ENCODE measurements at regions of chr2 and their contacts with region 1.

Region 1: DNA sequence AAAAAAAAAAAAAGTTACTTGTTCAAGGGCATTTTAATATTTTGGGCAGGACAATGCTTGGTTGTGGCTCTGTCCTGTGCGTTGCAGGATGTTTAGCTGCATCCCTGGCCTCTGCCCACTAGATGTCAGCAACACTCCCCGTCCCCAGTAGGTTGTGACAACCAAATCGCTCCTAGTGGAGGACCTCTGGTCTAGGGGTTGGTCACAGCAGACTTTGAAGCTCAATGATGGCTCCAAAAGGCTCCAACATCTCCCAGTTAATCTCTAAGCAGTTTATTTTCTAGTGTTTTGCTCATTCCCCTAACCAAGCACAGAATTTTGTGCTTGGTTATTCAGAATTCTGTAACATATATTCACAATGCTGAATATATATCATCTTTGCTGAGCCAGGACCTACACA is 67.0 kb downstream of the CHRNA1 start:
- DNase-seq: peak; percentile 81
- ATAC-seq: peak; percentile 96
- H3K4me3 Mint-ChIP-seq: no peak overlapping the region
- H3K27ac Mint-ChIP-seq: no peak overlapping the region
- H3K4me1 Mint-ChIP-seq: peaks cover 6% of the 10 kb centered on the region
- H3K27me3 Mint-ChIP-seq: peaks cover 20% of the 10 kb centered on the region

Region 2: DNA sequence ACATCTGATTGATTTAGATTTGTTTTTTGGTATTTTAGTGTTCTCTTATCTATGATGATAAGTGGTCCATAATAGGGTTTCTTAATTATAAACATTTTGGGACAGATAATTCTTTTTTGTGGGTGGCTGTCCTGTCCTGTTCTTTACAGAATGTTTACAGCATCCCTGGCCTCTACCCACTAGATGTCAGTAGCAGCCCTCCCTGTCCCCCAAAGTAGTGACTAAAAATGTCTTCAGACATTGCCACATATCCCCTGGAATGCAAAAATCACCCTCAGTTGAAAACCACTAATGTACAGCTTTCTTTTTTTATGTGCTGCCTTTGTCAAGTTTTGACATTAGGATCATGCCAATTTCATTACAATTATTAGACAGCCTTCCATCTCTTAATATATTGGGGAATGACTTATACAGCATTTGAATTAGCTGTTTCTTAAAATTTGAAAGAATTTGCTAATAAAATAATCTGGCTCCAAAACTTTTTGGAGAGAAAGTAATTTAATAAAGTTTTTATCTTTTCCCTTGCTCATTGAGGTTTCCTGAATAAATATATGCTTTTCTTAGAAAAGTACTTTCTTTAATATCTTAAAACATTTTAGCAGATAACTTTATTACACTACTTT is 119.2 kb before region 1 on chr2:
- CTCF ChIA-PET with region 1: interaction called, 17 read pairs
- POLR2A ChIA-PET with region 1: no interaction called
- DNase-seq: peak; percentile 76
- ATAC-seq: peak; percentile 78
- H3K4me3 Mint-ChIP-seq: no peak overlapping the region
- H3K27ac Mint-ChIP-seq: no peak overlapping the region
- H3K4me1 Mint-ChIP-seq: peaks cover 64% of the 10 kb centered on the region
- H3K27me3 Mint-ChIP-seq: no peaks in the 10 kb centered on the region

Region 3: GRCh38 chr2:174682578-174683391 is 14.5 kb before region 1 on chr2:
- CTCF ChIA-PET with region 1: interaction called, 182 read pairs
- POLR2A ChIA-PET with region 1: no interaction called
- DNase-seq: peak; percentile 70
- ATAC-seq: peak; percentile 70
- H3K4me3 Mint-ChIP-seq: peak overlapping the region; percentile 81
- H3K27ac Mint-ChIP-seq: peak overlapping the region; percentile 88
- H3K4me1 Mint-ChIP-seq: peaks cover 70% of the 10 kb centered on the region
- H3K27me3 Mint-ChIP-seq: no peaks in the 10 kb centered on the region

Region 4: GRCh38 chr2:174729797-174730697 is 32.8 kb after region 1 on chr2:
- CTCF ChIA-PET with region 1: interaction called, 15 read pairs
- POLR2A ChIA-PET with region 1: no interaction called
- DNase-seq: peak; percentile 47
- ATAC-seq: peak; percentile 81
- H3K4me3 Mint-ChIP-seq: peak overlapping the region; percentile 80
- H3K27ac Mint-ChIP-seq: peak overlapping the region; percentile 11
- H3K4me1 Mint-ChIP-seq: peaks cover 33% of the 10 kb centered on the region
- H3K27me3 Mint-ChIP-seq: peaks cover 32% of the 10 kb centered on the region

Region 5: GRCh38 chr2:174771631-174772471 is 74.6 kb after region 1 on chr2:
- CTCF ChIA-PET with region 1: interaction called, 89 read pairs
- POLR2A ChIA-PET with region 1: no interaction called
- DNase-seq: peak; percentile 65
- ATAC-seq: peak; percentile 75
- H3K4me3 Mint-ChIP-seq: no peak overlapping the region
- H3K27ac Mint-ChIP-seq: no peak overlapping the region
- H3K4me1 Mint-ChIP-seq: peaks cover 18% of the 10 kb centered on the region
- H3K27me3 Mint-ChIP-seq: peaks cover 4% of the 10 kb centered on the region

Region 6: GRCh38 chr2:174992886-174993285 is 295.6 kb after region 1 on chr2:
- CTCF ChIA-PET with region 1: interaction called, 54 read pairs
- POLR2A ChIA-PET with region 1: no interaction called
- DNase-seq: no peak
- ATAC-seq: no peak
- H3K4me3 Mint-ChIP-seq: no peak overlapping the region
- H3K27ac Mint-ChIP-seq: no peak overlapping the region
- H3K4me1 Mint-ChIP-seq: peaks cover 2% of the 10 kb centered on the region
- H3K27me3 Mint-ChIP-seq: peaks cover 12% of the 10 kb centered on the region

Measured in activated CD8-positive, alpha-beta T cell treated with anti-CD3 and anti-CD28 coated beads, Interleukin-2, amount 10 ng/mL, durations not matched to agents 7 days and 5 days (primary cell).